HCT116 (cell line): ENCODE measurements at regions of chr1 and their contacts with region 1.

Region 1: GRCh38 chr1:11262171-11263049 is at the start of gene MTOR:
- DNase-seq: peak; percentile 100
- ATAC-seq: peak; percentile 97
- H3K4me3 ChIP-seq: peak within 1 kb of the TSS; percentile 95 to 98
- H3K27ac ChIP-seq: peak within 1 kb of the TSS; percentile 60
- H3K4me1 ChIP-seq: peaks cover 3 to 11% of the 10 kb centered on the region in 2 experiments; a peak in 2 of 4 replicates
- H3K27me3 ChIP-seq: no peaks in the 10 kb centered on the region
- CTCF ChIP-seq: peak in 2 of 3 experiments; percentile 23 to 29; a peak in 2 of 6 replicates
- POLR2A ChIP-seq: no peak
- RAD21 ChIP-seq: no peak
- total RNA-seq, gene MTOR: 42.2 TPM

Region 2: GRCh38 chr1:10755970-10756521 is 506.4 kb before region 1 on chr1:
- CTCF ChIA-PET with region 1: no interaction called
- POLR2A ChIA-PET with region 1: no interaction called
- RAD21 ChIA-PET with region 1: no interaction called
- intact Hi-C with region 1: no loop called
- DNase-seq: no peak
- ATAC-seq: peak; percentile 95
- H3K4me3 ChIP-seq: no peak overlapping the region
- H3K27ac ChIP-seq: no peak overlapping the region
- H3K4me1 ChIP-seq: peaks cover 2 to 9% of the 10 kb centered on the region in 2 experiments; a peak in 2 of 4 replicates
- H3K27me3 ChIP-seq: no peaks in the 10 kb centered on the region
- CTCF ChIP-seq: no peak
- POLR2A ChIP-seq: no peak
- RAD21 ChIP-seq: no peak

Region 3: GRCh38 chr1:10996100-10996499 is 266.3 kb before region 1 on chr1:
- CTCF ChIA-PET with region 1: no interaction called
- POLR2A ChIA-PET with region 1: no interaction called
- RAD21 ChIA-PET with region 1: no interaction called
- intact Hi-C with region 1: no loop called
- DNase-seq: no peak
- ATAC-seq: no peak
- H3K4me3 ChIP-seq: no peak overlapping the region
- H3K27ac ChIP-seq: no peak overlapping the region
- H3K4me1 ChIP-seq: no peaks in the 10 kb centered on the region
- H3K27me3 ChIP-seq: no peaks in the 10 kb centered on the region
- CTCF ChIP-seq: no peak
- POLR2A ChIP-seq: no peak
- RAD21 ChIP-seq: no peak

Region 4: GRCh38 chr1:11147197-11147770 is 115.1 kb before region 1 on chr1:
- CTCF ChIA-PET with region 1: no interaction called
- POLR2A ChIA-PET with region 1: no interaction called
- RAD21 ChIA-PET with region 1: no interaction called
- intact Hi-C with region 1: no loop called
- DNase-seq: no peak
- ATAC-seq: no peak
- H3K4me3 ChIP-seq: no peak overlapping the region
- H3K27ac ChIP-seq: no peak overlapping the region
- H3K4me1 ChIP-seq: no peaks in the 10 kb centered on the region
- H3K27me3 ChIP-seq: no peaks in the 10 kb centered on the region
- CTCF ChIP-seq: no peak
- POLR2A ChIP-seq: no peak
- RAD21 ChIP-seq: no peak

Region 5: GRCh38 chr1:11272832-11273594 is 10.6 kb after region 1 on chr1 and contains the start of gene UBIAD1:
- CTCF ChIA-PET with region 1: no interaction called
- POLR2A ChIA-PET with region 1: interaction called, 11 read pairs
- RAD21 ChIA-PET with region 1: no interaction called
- intact Hi-C with region 1: no loop called
- DNase-seq: peak; percentile 71
- ATAC-seq: peak; percentile 88
- H3K4me3 ChIP-seq: peak within 1 kb of the TSS; percentile 82 to 96
- H3K27ac ChIP-seq: peak within 1 kb of the TSS; percentile 75
- H3K4me1 ChIP-seq: peaks cover 9 to 19% of the 10 kb centered on the region in 2 experiments
- H3K27me3 ChIP-seq: no peaks in the 10 kb centered on the region
- CTCF ChIP-seq: no peak; a peak in 1 of 6 replicates
- POLR2A ChIP-seq: no peak
- RAD21 ChIP-seq: no peak
- total RNA-seq, gene UBIAD1: 17.2 TPM

Region 6: GRCh38 chr1:11478571-11479374 is 216.4 kb after region 1 on chr1 and contains the start of gene DISP3:
- CTCF ChIA-PET with region 1: no interaction called
- POLR2A ChIA-PET with region 1: no interaction called
- RAD21 ChIA-PET with region 1: no interaction called
- intact Hi-C with region 1: loop called (anchors 5 kb)
- DNase-seq: peak; percentile 56
- ATAC-seq: peak; percentile 91
- H3K4me3 ChIP-seq: peak within 1 kb of the TSS; percentile 55 to 68
- H3K27ac ChIP-seq: peak within 1 kb of the TSS; percentile 70; the same call in 1 of the 2 replicates
- H3K4me1 ChIP-seq: peaks cover 0 to 16% of the 10 kb centered on the region in 2 experiments; a peak in 1 of 4 replicates
- H3K27me3 ChIP-seq: peaks cover 58% of the 10 kb centered on the region
- CTCF ChIP-seq: peak; percentile 15 to 84 (median 62); a peak in 4 of 6 replicates
- POLR2A ChIP-seq: peak; percentile 88
- RAD21 ChIP-seq: peak; percentile 42
- total RNA-seq, gene DISP3: 2.3 TPM

Region 7: DNA sequence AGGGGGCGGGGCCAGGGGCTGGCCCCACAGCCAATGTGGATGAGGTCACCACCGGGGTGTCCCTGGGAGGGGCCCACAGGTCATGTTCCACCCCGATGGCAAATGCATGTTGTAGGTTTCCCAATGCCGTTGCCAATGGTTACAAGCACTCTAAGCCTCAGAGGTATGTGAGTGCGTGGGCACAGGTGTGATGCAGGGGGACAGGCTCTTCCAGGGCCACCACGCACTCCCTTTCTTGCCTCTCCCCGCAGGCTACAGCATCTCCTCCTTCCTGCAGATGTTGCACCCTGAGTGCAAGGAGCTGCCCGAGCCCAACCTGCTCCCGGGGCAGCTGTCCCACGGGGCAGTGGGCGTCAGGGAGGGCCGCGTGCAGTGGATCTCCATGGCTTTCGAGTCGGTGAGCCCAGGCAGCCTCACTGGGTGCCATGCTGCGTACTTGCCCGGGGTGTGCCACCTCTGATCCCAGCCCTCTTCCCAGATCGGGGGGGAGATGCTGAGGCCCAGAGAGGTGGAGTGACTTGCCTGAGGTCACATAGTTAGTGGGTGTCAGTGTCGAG is 269.0 kb after region 1 on chr1:
- CTCF ChIA-PET with region 1: no interaction called
- POLR2A ChIA-PET with region 1: no interaction called
- RAD21 ChIA-PET with region 1: no interaction called
- intact Hi-C with region 1: no loop called
- DNase-seq: no peak
- ATAC-seq: no peak
- H3K4me3 ChIP-seq: no peak overlapping the region
- H3K27ac ChIP-seq: no peak overlapping the region
- H3K4me1 ChIP-seq: no peaks in the 10 kb centered on the region
- H3K27me3 ChIP-seq: no peaks in the 10 kb centered on the region
- CTCF ChIP-seq: no peak
- POLR2A ChIP-seq: no peak
- RAD21 ChIP-seq: no peak